Caco-2 (cell line): ENCODE measurements at regions of chr2 and their contacts with region 1.

Region 1: GRCh38 chr2:224062481-224063297 is 23.6 kb upstream of the SERPINE2 start:
- DNase-seq: no peak
- H3K4me3 ChIP-seq: no peak overlapping the region
- H3K4me3 Mint-ChIP-seq: no peak overlapping the region
- H3K27ac Mint-ChIP-seq: no peak overlapping the region
- H3K4me1 ChIP-seq: no peaks in the 10 kb centered on the region
- H3K4me1 Mint-ChIP-seq: no peaks in the 10 kb centered on the region
- H3K27me3 ChIP-seq: no peaks in the 10 kb centered on the region
- H3K27me3 Mint-ChIP-seq: peaks cover 26% of the 10 kb centered on the region
- CTCF ChIP-seq: peak; percentile 26 to 34

Region 2: GRCh38 chr2:223488814-223489213 is 573.9 kb before region 1 on chr2:
- CTCF ChIA-PET with region 1: no interaction called
- POLR2A ChIA-PET with region 1: no interaction called
- intact Hi-C with region 1: no loop called
- DNase-seq: no peak
- H3K4me3 ChIP-seq: no peak overlapping the region
- H3K4me3 Mint-ChIP-seq: no peak overlapping the region
- H3K27ac Mint-ChIP-seq: no peak overlapping the region
- H3K4me1 ChIP-seq: no peaks in the 10 kb centered on the region
- H3K4me1 Mint-ChIP-seq: no peaks in the 10 kb centered on the region
- H3K27me3 ChIP-seq: no peaks in the 10 kb centered on the region
- H3K27me3 Mint-ChIP-seq: peaks cover 7% of the 10 kb centered on the region
- CTCF ChIP-seq: no peak

Region 3: GRCh38 chr2:223970343-223971128 is 92.2 kb before region 1 on chr2:
- CTCF ChIA-PET with region 1: interaction called, 10 read pairs
- POLR2A ChIA-PET with region 1: no interaction called
- intact Hi-C with region 1: no loop called
- DNase-seq: peak in 1 of 2 experiments; percentile 76
- H3K4me3 ChIP-seq: no peak overlapping the region
- H3K4me3 Mint-ChIP-seq: no peak overlapping the region
- H3K27ac Mint-ChIP-seq: no peak overlapping the region
- H3K4me1 ChIP-seq: no peaks in the 10 kb centered on the region
- H3K4me1 Mint-ChIP-seq: no peaks in the 10 kb centered on the region
- H3K27me3 ChIP-seq: no peaks in the 10 kb centered on the region
- H3K27me3 Mint-ChIP-seq: no peaks in the 10 kb centered on the region
- CTCF ChIP-seq: peak; percentile 95 to 98